Gastrocnemius medialis (tissue), 4 donors: ENCODE measurements at regions of chr9 and their contacts with region 1.

Region 1: DNA sequence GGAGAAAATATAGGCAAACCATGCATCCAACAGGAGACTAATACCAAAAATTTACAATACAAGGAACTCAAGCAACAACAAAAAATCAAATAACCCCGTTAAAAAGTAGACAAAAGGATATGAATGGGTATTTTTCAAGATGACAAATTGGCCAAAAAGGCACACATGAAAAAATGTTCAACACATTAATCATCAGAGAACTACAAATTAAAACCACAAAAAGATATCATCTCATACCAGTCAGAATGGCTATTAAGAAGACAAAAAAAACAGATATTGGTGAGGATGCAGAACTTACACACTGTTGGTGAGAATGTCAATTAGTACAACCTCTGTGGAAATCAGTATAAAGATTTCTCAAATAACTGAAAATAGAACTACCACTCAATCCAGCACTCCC is 35.0 kb downstream of the TEX10 start:
- DNase-seq: no peak
- ATAC-seq: no peak
- H3K4me3 ChIP-seq: no peak overlapping the region
- H3K27ac ChIP-seq: no peak overlapping the region
- H3K4me1 ChIP-seq: peaks cover 6 to 8% of the 10 kb centered on the region in 2 donors
- H3K27me3 ChIP-seq: no peaks in the 10 kb centered on the region
- CTCF ChIP-seq: no peak
- POLR2A ChIP-seq: no peak

Region 2: DNA sequence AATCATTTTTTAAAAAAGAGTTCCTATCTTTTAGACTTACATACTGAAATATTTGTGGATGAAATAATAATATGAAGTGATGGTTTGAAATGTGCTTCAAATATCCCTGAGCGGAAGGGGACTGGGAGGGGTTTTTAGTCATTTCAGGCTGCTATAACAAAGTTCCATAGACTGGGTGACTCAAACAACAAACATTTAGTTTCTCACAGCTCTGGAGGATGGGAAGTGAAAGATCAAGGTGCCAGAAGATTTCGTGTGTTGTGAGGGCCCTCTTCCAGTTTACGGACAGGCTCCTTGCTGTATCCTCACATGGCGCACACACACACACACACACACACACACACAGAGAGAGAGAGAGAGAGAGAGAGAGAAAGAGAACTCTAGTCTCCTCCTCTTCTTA is 62.2 kb after region 1 on chr9:
- in situ Hi-C with region 1: no loop called
- intact Hi-C with region 1: loop called (anchors 10 kb)
- DNase-seq: no peak
- ATAC-seq: no peak
- H3K4me3 ChIP-seq: no peak overlapping the region
- H3K27ac ChIP-seq: no peak overlapping the region
- H3K4me1 ChIP-seq: no peaks in the 10 kb centered on the region
- H3K27me3 ChIP-seq: no peaks in the 10 kb centered on the region
- CTCF ChIP-seq: no peak
- POLR2A ChIP-seq: no peak

Region 3: GRCh38 chr9:100884518-100884917 is 566.8 kb after region 1 on chr9:
- in situ Hi-C with region 1: no loop called
- intact Hi-C with region 1: no loop called
- DNase-seq: no peak
- ATAC-seq: no peak
- H3K4me3 ChIP-seq: no peak overlapping the region
- H3K27ac ChIP-seq: no peak overlapping the region
- H3K4me1 ChIP-seq: no peaks in the 10 kb centered on the region
- H3K27me3 ChIP-seq: no peaks in the 10 kb centered on the region
- CTCF ChIP-seq: no peak
- POLR2A ChIP-seq: no peak